ENCODE measurements at regions of chr7 and their contacts with region 1.

Region 1: DNA sequence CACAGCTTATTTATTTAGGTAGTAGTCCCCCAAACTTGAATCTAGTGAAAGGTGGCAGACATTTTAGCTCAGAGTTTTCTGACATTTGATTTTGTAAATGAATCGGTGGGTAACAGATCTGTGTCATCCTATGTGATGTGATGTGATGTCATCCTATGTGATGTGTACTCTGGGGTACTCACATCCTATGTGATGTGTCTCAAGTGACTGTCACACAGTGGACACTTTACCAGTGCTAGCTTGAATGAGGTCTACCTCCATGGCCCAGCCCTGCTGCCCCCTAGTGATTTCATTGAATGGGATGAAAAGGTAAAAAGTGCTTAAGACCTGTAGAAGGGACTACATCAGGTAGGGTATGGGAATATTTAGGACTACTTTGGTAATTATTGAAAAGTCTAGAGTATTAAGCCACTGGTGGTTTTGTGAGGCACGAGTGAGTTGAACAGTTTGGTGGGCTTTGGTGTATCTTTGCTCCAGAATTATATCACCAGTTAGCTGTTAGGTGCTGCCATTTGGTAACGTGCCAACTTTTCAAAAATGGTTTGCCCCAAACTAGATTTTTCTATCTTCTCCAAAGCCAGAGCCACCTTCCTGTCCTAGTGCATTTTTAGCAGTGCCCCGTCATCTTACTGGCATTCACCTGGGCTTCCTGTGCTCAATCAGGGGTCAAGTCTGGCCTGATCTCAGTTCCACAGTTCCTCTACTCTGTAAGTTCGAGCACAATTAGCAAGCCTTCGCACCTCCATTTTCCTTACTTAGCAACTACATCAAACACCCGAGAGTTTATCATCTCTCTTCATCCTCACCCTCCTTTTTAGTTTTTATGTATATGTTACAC is 9.7 kb downstream of the EIF4H start:
- DNase-seq: peak; percentile 52
- H3K4me3 Mint-ChIP-seq: no peak overlapping the region
- H3K27ac Mint-ChIP-seq: peak overlapping the region; percentile 61
- H3K4me1 Mint-ChIP-seq: peaks cover 85% of the 10 kb centered on the region
- H3K27me3 Mint-ChIP-seq: no peaks in the 10 kb centered on the region

Region 2: DNA sequence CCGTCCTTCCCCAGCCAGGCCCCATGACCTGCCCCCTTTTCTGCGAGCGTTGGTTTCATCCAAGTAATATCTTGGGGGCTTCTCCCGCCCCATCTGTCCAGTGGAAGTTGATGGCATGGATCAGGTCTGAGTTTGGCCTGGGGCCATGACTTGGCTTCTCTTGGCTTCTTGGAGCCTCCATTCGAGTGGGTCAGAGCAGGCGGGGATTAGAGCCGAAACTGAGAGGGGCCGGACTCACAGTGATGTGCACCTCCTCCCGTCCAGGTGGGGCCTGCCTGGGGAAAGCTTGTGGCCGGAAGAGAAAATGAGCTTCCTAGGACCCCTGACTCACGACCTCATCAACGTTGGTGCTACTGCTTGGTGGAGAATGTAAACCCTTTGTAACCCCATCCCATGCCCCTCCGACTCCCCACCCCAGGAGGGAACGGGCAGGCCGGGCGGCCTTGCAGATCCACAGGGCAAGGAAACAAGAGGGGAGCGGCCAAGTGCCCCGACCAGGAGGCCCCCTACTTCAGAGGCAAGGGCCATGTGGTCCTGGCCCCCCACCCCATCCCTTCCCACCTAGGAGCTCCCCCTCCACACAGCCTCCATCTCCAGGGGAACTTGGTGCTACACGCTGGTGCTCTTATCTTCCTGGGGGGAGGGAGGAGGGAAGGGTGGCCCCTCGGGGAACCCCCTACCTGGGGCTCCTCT is 115.3 kb before region 1 on chr7:
- CTCF ChIA-PET with region 1: interaction called, 10 read pairs
- intact Hi-C with region 1: loop called (anchors 1 kb)
- DNase-seq: no peak
- H3K4me3 Mint-ChIP-seq: no peak overlapping the region
- H3K27ac Mint-ChIP-seq: no peak overlapping the region
- H3K4me1 Mint-ChIP-seq: no peaks in the 10 kb centered on the region
- H3K27me3 Mint-ChIP-seq: no peaks in the 10 kb centered on the region

Region 3: GRCh38 chr7:74141705-74142104 is 42.1 kb before region 1 on chr7:
- CTCF ChIA-PET with region 1: no interaction called
- intact Hi-C with region 1: loop called (anchors 5 kb)
- DNase-seq: peak; percentile 12
- H3K4me3 Mint-ChIP-seq: no peak overlapping the region
- H3K27ac Mint-ChIP-seq: no peak overlapping the region
- H3K4me1 Mint-ChIP-seq: peaks cover 3% of the 10 kb centered on the region
- H3K27me3 Mint-ChIP-seq: no peaks in the 10 kb centered on the region

Region 4: GRCh38 chr7:74302745-74303221 is 119.0 kb after region 1 on chr7:
- CTCF ChIA-PET with region 1: no interaction called
- intact Hi-C with region 1: no loop called
- DNase-seq: no peak
- H3K4me3 Mint-ChIP-seq: no peak overlapping the region
- H3K27ac Mint-ChIP-seq: no peak overlapping the region
- H3K4me1 Mint-ChIP-seq: peaks cover 13% of the 10 kb centered on the region
- H3K27me3 Mint-ChIP-seq: peaks cover 11% of the 10 kb centered on the region

Measured in activated naive CD4-positive, alpha-beta T cell treated with anti-CD3 and anti-CD28 coated beads for 36 hours (primary cell).